ENCODE measurements at regions of chr21 and their contacts with region 1.

Region 1: GRCh38 chr21:38355992-38356797 is 99.4 kb downstream of the KCNJ15 start:
- DNase-seq: peak; percentile 49
- H3K4me3 ChIP-seq: no peak overlapping the region
- CTCF ChIP-seq: peak; percentile 99

Region 2: GRCh38 chr21:37700641-37701202 is 655.5 kb before region 1 on chr21:
- in situ Hi-C with region 1: loop called (anchors 25 kb)
- DNase-seq: peak; percentile 69
- H3K4me3 ChIP-seq: no peak overlapping the region
- CTCF ChIP-seq: peak; percentile 82

Region 3: DNA sequence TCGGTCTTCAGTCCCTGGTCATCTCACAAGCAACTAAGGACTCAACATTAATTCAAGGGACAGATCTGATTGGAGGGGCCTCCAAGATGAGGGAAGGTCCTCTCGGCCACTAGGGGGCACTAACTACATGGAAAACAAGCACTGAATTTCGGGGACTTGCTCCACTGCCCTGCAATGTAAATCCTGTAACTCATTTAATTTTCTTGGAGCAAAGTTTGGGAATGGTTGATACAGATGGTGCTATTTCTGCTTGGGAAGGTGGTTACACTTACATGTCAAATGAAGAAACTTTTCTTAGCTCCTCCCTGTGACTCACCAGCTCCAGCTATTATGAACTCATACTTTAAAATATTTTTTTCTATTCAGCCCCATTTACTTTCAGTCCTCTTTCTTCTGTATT is 196.8 kb before region 1 on chr21:
- in situ Hi-C with region 1: loop called (anchors 25 kb)
- DNase-seq: peak; percentile 82
- H3K4me3 ChIP-seq: no peak overlapping the region
- CTCF ChIP-seq: peak; percentile 87

Region 4: GRCh38 chr21:38289705-38290485 is 66.3 kb before region 1 on chr21:
- in situ Hi-C with region 1: no loop called
- DNase-seq: peak; percentile 100
- H3K4me3 ChIP-seq: no peak overlapping the region
- CTCF ChIP-seq: no peak

Region 5: DNA sequence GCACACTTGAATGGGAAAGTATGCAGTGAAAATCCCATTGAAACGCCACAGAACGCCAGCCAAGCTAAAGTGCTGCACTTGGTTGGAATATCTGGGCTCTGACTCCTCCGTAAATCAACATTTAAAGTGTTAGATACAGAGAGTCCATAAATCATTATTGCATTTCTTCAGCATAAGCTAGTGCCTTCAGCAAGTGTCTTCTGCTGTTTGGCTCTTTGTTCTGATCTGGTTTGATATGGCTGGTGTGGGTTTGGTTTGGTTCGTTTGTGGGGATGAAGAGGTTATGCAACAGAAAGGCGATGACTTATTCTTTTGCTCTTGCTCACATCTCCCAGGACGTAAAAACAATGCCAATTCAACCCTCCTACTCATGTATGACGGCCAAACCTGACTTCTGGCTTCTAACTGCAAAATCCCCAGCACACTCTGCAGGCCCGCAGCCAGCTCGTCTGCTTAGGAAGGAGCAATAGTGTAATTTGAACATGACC is 263.8 kb after region 1 on chr21:
- in situ Hi-C with region 1: no loop called
- DNase-seq: peak; percentile 13
- H3K4me3 ChIP-seq: no peak overlapping the region
- CTCF ChIP-seq: no peak